CD8-positive, alpha-beta T cell (primary cell): ENCODE measurements at regions of chr9 and their contacts with region 1.

Region 1: DNA sequence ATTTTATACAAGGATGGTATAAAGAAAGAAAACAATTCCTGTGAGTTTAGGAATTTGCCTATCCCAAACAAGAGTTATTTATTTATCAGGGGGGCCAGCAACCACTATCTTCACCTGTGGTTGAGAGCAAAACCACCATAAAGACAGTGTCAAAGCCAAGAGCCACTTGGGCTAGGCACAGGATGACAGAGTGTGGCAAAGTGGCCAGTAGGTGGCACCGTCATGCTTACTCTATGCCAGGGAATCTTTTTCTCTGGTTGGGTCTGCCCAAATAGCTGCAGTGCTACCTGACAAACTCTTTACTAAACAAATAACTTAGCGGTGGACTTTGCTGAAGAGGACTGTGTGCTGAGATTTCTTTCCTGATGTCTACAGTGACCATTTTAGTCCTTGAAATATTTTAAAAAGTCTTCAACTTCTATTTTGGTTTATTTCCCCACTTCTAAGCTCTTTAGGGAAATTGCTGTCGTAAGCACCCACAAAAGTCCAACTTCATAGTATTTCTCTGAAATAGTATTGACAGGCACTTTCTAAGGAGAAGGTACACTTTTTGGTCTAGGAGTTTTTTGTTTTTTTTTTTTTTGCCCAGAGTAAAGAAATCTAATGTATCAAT is 285.0 kb downstream of the RFX3 start:
- DNase-seq: peak; percentile 32 to 71 (median 59)
- ATAC-seq: peak; percentile 77
- H3K4me3 ChIP-seq: no peak overlapping the region
- H3K4me3 Mint-ChIP-seq: no peak overlapping the region
- H3K27ac ChIP-seq: no peak overlapping the region
- H3K27ac Mint-ChIP-seq: no peak overlapping the region
- H3K4me1 ChIP-seq: no peaks in the 10 kb centered on the region
- H3K4me1 Mint-ChIP-seq: no peaks in the 10 kb centered on the region
- H3K27me3 ChIP-seq: no peaks in the 10 kb centered on the region
- H3K27me3 Mint-ChIP-seq: no peaks in the 10 kb centered on the region
- CTCF ChIP-seq: peak; percentile 70

Region 2: DNA sequence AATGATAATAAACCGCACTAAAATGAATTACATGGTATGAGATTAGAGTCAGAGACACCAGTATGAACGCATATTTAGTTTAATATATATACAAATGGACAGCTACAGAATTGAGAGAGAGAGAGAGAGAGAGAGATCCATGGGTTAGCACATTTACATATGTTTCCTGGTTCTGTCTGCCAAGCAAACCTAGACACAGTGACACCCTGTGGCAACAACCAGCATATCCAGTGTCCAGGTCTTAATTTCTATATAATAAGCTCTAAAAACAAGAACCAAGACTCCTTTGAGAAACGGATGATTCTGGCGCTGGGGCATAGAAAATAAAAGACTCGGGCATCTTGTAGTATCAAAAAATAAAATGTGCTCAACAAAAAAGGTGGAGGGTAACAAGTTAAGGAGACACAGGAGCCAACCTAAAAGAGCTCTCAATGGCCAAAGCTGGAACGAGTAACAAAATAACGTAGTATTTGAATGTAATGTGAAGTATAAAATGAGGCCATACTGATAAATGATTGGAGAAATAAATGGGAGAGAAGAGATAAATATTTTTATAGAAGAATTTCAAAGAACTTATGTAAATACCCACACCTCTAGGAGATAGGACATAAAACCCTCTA is 200.5 kb after region 1 on chr9:
- CTCF ChIA-PET with region 1: interaction called, 11 read pairs
- POLR2A ChIA-PET with region 1: no interaction called
- intact Hi-C with region 1: loop called (anchors 1 kb)
- DNase-seq: peak in 7 of 9 experiments; percentile 6 to 69 (median 38)
- ATAC-seq: peak; percentile 79
- H3K4me3 ChIP-seq: no peak overlapping the region
- H3K4me3 Mint-ChIP-seq: no peak overlapping the region
- H3K27ac ChIP-seq: no peak overlapping the region
- H3K27ac Mint-ChIP-seq: no peak overlapping the region
- H3K4me1 ChIP-seq: no peaks in the 10 kb centered on the region
- H3K4me1 Mint-ChIP-seq: peaks cover 9% of the 10 kb centered on the region
- H3K27me3 ChIP-seq: no peaks in the 10 kb centered on the region
- H3K27me3 Mint-ChIP-seq: no peaks in the 10 kb centered on the region
- CTCF ChIP-seq: peak; percentile 47

Region 3: DNA sequence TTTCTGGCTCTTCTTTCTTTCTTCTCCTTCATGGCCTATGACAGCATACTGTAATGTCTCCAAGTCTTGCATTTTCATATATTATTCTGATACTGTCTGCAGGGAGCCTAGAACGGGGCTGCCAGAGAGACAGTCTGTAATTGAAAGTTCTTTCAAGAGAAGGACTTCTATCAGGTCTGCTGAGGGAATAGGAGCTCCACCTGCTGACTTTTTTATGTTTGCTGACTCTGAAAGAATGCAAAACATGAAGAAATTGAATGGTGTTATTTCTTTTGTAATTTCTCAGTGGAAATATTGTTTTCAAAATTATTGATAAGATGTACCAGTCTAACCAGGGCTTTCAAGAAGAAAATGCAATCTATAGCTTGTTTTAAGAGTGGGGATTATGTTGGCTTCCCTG is 406.9 kb after region 1 on chr9:
- CTCF ChIA-PET with region 1: no interaction called
- POLR2A ChIA-PET with region 1: no interaction called
- intact Hi-C with region 1: loop called (anchors 2 to 10 kb)
- DNase-seq: peak in 2 of 9 experiments; percentile 9 to 24
- ATAC-seq: no peak
- H3K4me3 ChIP-seq: no peak overlapping the region
- H3K4me3 Mint-ChIP-seq: no peak overlapping the region
- H3K27ac ChIP-seq: no peak overlapping the region
- H3K27ac Mint-ChIP-seq: no peak overlapping the region
- H3K4me1 ChIP-seq: no peaks in the 10 kb centered on the region
- H3K4me1 Mint-ChIP-seq: no peaks in the 10 kb centered on the region
- H3K27me3 ChIP-seq: no peaks in the 10 kb centered on the region
- H3K27me3 Mint-ChIP-seq: no peaks in the 10 kb centered on the region
- CTCF ChIP-seq: no peak

Region 4: GRCh38 chr9:4117835-4118610 is 877.3 kb after region 1 on chr9:
- CTCF ChIA-PET with region 1: no interaction called
- POLR2A ChIA-PET with region 1: no interaction called
- intact Hi-C with region 1: loop called in 1 of 2 experiments (anchors 10 kb)
- DNase-seq: peak in 6 of 9 experiments; percentile 3 to 62 (median 42)
- ATAC-seq: no peak
- H3K4me3 ChIP-seq: no peak overlapping the region
- H3K4me3 Mint-ChIP-seq: no peak overlapping the region
- H3K27ac ChIP-seq: no peak overlapping the region
- H3K27ac Mint-ChIP-seq: no peak overlapping the region
- H3K4me1 ChIP-seq: no peaks in the 10 kb centered on the region
- H3K4me1 Mint-ChIP-seq: no peaks in the 10 kb centered on the region
- H3K27me3 ChIP-seq: no peaks in the 10 kb centered on the region
- H3K27me3 Mint-ChIP-seq: no peaks in the 10 kb centered on the region
- CTCF ChIP-seq: peak; percentile 25